Common myeloid progenitor, CD34-positive (primary cell): ENCODE measurements at regions of chr20 and their contacts with region 1.

Region 1: GRCh38 chr20:59495894-59496510 is 108.3 kb upstream of the PHACTR3 start:
- DNase-seq: peak; percentile 50 to 74 (median 70)
- H3K4me3 ChIP-seq: no peak overlapping the region
- H3K27ac ChIP-seq: no peak overlapping the region
- H3K4me1 ChIP-seq: no peaks in the 10 kb centered on the region
- H3K27me3 ChIP-seq: peaks cover 0 to 33% (median 5%) of the 10 kb centered on the region in 5 experiments

Region 2: GRCh38 chr20:58864350-58864749 is 631.7 kb before region 1 on chr20:
- CTCF ChIA-PET with region 1: interaction called, 14 read pairs
- POLR2A ChIA-PET with region 1: no interaction called
- DNase-seq: peak in 1 of 3 donors; percentile 34
- H3K4me3 ChIP-seq: no peak overlapping the region
- H3K27ac ChIP-seq: no peak overlapping the region
- H3K4me1 ChIP-seq: no peaks in the 10 kb centered on the region
- H3K27me3 ChIP-seq: peaks cover 0 to 24% (median 7%) of the 10 kb centered on the region in 5 experiments

Region 3: GRCh38 chr20:59469267-59470252 is 26.4 kb before region 1 on chr20:
- CTCF ChIA-PET with region 1: no interaction called
- POLR2A ChIA-PET with region 1: no interaction called
- DNase-seq: no peak
- H3K4me3 ChIP-seq: no peak overlapping the region
- H3K27ac ChIP-seq: no peak overlapping the region
- H3K4me1 ChIP-seq: no peaks in the 10 kb centered on the region
- H3K27me3 ChIP-seq: peaks cover 0 to 4% (median 3%) of the 10 kb centered on the region in 5 experiments

Region 4: DNA sequence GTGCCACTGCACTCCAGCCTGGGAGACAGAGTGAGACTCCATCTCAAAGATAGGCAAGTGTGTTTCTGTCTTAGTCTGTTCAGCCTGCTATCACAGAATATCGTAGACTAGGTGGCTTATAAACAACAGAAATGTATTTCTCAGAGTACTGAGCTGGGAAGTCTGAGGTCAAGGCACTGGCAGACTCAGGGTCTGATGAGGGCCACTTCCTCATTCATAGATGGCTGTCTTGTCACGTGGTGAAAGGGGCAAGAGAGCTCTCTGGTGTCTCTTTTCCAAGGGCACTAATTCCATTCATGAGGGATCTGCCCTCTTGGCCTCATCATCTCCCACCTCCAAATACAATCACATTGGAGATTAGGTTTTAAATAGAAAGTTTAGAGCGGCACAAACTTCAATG is 12.7 kb after region 1 on chr20:
- CTCF ChIA-PET with region 1: interaction called, 10 read pairs
- POLR2A ChIA-PET with region 1: no interaction called
- DNase-seq: no peak
- H3K4me3 ChIP-seq: no peak overlapping the region
- H3K27ac ChIP-seq: no peak overlapping the region
- H3K4me1 ChIP-seq: no peaks in the 10 kb centered on the region
- H3K27me3 ChIP-seq: peaks cover 3 to 18% (median 5%) of the 10 kb centered on the region in 5 experiments